OCI-LY7 (cell line): ENCODE measurements at regions of chr5 and their contacts with region 1.

Region 1: GRCh38 chr5:93794954-93795353 is 53.6 kb upstream of the POU5F2 start:
- DNase-seq: peak; percentile 22
- H3K4me3 ChIP-seq: no peak overlapping the region
- H3K27ac ChIP-seq: no peak overlapping the region
- H3K4me1 ChIP-seq: peaks cover 8% of the 10 kb centered on the region
- CTCF ChIP-seq: no peak

Region 2: GRCh38 chr5:93594591-93595419 is 200.1 kb before region 1 on chr5:
- CTCF ChIA-PET with region 1: no interaction called
- POLR2A ChIA-PET with region 1: no interaction called
- intact Hi-C with region 1: loop called (anchors 5 kb)
- DNase-seq: no peak
- H3K4me3 ChIP-seq: no peak overlapping the region
- H3K27ac ChIP-seq: no peak overlapping the region
- H3K4me1 ChIP-seq: no peaks in the 10 kb centered on the region
- CTCF ChIP-seq: no peak

Region 3: DNA sequence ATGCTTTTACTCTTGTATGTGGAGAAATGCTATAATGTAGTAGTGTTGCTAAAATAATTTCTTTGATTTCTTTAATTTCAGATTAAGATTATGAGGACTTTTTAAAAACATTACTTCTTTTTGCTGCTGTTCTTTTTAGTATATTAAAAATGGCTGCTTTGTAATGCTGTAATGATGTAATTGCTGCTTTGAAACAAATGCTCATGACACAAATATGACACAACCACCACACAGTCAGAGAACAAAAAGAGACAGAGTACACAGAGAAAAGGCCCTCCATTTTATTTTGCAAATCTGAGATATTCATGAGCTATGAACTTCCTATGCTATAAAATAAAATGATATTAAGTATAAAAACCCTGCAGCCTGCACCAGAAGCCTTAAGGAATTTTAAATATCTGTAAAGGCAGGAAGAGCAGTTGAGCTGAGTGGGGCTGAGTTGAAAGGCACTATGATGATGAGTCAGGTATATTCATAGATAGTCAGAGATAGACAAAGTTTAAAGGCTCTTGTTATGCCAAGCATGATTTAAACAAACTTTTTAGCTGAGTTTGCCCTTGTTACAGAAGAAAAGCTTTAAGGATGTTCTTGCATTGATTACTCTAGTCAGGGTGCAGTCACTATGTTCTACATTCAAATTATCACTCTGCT is 48.4 kb before region 1 on chr5:
- CTCF ChIA-PET with region 1: no interaction called
- POLR2A ChIA-PET with region 1: no interaction called
- intact Hi-C with region 1: no loop called
- DNase-seq: no peak
- H3K4me3 ChIP-seq: no peak overlapping the region
- H3K27ac ChIP-seq: no peak overlapping the region
- H3K4me1 ChIP-seq: no peaks in the 10 kb centered on the region
- CTCF ChIP-seq: no peak